Posterior cingulate gyrus (tissue), 11 donors: ENCODE measurements at regions of chr3 and their contacts with region 1.

Region 1: GRCh38 chr3:190224863-190225692 is 97.2 kb downstream of the CLDN1 start:
- DNase-seq: no peak

Region 2: DNA sequence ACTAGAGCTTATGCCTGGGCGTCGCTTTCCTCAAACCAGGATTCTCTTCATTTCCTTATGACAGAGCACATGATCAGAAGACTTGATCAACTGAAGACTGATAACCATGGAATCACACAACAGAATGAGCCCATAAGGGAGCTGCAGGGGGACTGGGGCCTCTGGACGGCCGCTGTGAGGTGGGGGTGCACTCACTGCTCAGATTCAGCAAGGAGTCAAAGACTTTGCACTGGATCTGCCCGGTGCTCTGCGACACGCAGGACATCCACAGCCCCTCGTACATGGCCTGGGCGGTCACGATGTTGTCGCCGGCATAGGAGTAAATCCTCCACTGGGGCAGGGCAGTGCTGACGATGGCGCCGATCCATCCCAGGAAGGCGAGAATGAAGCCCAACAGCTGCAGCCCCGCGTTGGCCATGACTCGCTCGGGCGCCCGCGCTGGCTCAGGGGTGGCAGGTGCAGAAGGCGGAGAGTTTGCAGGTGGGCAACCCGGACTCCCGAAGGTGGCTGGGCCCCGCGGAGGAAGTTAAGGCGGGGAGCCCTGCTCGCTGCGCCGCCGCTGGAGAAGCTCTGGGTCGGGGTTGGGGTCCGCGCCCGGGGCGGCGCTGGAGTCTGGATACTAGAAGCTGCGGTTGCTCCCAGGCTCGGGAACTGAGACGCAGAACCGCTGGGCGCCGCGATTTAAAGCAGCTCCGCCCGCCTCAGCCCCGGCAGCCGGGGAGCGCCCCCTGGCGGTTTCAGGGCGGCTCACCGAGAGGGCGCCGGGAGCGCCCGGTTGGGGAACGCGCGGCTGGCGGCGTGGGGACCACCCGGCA is 96.9 kb after region 1 on chr3 and contains the start of gene CLDN1:
- intact Hi-C with region 1: loop called (anchors 2 kb)
- DNase-seq: peak; percentile 56 to 96 (median 76)

Region 3: DNA sequence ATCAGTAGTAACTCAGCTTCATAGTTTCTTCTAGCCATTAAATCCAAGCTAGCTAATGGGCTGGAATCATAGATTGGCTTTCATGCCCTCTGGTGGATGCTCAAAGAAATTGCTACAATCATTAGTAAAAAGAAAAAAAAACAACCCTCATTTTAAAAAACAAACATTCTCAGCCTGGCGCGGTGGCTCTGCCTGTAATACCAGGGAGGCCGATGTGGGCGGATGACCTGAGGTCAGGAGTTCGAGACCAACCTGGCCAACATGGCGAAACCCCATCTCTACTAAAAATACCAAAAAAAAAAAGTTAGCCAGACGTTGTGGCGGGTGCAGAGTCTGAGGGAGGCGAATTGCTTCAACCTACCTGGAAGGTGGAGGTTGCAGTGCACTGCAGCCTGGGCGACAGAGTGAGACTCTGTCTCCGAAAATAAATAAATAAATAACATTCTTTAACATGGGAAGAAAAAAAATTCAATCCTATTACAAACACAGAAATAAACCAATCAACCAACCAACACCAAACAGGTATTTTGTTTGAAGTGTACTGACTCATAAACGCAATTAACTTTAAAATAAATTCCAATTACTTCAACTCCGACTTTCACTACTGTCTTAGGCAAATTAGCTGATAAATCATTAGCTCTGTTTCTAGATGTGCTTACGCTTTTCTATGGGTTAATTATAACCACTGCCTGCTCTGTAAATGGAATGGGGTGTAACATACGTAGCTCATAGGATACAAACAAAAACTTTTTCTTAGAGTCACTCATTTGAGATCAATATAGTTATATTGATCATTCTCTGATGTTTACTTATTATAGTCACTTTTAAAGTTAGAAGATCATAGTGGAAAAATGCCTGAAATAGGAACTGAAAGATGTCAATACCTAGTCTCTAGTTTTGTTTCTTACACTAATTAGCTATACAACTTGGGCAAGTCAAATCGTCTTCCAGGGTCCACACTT is 199.7 kb after region 1 on chr3:
- intact Hi-C with region 1: loop called (anchors 2 kb)
- DNase-seq: peak in 7 of 10 donors; percentile 18 to 83 (median 32)